ENCODE measurements at regions of chr6 and their contacts with region 1.

Region 1: GRCh38 chr6:137094411-137095008 is 49.7 kb upstream of the IL20RA start:
- DNase-seq: peak in 8 of 9 donors; percentile 17 to 56 (median 40)
- ATAC-seq: peak; percentile 80
- H3K4me3 ChIP-seq: no peak overlapping the region
- H3K4me3 Mint-ChIP-seq: peak overlapping the region in 1 of 10 donors; percentile 33
- H3K27ac ChIP-seq: no peak overlapping the region
- H3K27ac Mint-ChIP-seq: peak overlapping the region in 1 of 9 donors; percentile 11
- H3K4me1 ChIP-seq: peaks cover 0 to 3% of the 10 kb centered on the region in 2 donors
- H3K4me1 Mint-ChIP-seq: peaks cover 0 to 44% (median 0%) of the 10 kb centered on the region in 7 donors
- H3K27me3 ChIP-seq: no peaks in the 10 kb centered on the region
- H3K27me3 Mint-ChIP-seq: peaks cover 0 to 10% (median 0%) of the 10 kb centered on the region in 5 donors

Region 2: DNA sequence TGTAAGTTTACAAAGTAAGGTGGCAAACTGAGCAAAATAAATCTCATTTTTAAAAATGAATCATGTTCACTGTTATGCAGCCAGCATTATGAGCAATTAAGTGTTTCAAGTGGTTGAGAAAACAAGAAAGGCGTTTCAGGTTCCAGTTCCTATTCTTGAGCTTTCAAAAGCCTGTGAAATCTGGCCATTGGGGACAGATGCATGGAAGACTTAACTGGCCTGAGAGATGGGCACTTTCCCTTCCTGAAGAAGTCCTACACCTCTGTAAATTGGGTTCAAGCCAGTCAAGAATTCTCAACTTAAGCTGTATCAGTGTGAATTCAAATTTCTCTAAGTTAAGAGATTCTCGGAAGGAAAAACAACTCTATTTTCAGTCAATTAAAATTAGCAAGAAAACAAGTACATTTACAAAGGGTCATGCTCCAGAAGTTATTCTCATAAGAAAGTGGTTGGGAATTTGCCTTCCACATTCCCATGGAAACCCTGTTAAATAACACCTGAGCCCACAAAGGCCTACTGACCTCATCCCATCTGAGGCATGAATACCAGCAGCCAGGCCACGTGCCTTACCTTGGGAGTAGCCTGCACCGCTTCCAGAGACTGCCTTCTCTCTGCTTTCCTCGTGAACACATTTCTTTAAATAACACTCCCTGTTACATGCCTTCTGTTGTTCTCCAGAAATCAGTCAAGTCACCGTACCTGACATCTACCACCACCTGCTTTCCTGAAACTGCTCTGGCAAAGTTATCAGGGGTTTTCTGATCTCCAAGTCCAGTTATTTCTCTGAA is 321.6 kb before region 1 on chr6:
- CTCF ChIA-PET with region 1: no interaction called
- POLR2A ChIA-PET with region 1: no interaction called
- intact Hi-C with region 1: no loop called
- DNase-seq: no peak
- ATAC-seq: peak; percentile 34
- H3K4me3 ChIP-seq: no peak overlapping the region
- H3K4me3 Mint-ChIP-seq: no peak overlapping the region
- H3K27ac ChIP-seq: no peak overlapping the region
- H3K27ac Mint-ChIP-seq: peak overlapping the region in 3 of 9 donors; percentile 1 to 77 (median 23)
- H3K4me1 ChIP-seq: peaks cover 4 to 6% of the 10 kb centered on the region in 2 donors
- H3K4me1 Mint-ChIP-seq: peaks cover 11 to 51% (median 26%) of the 10 kb centered on the region in 7 donors
- H3K27me3 ChIP-seq: no peaks in the 10 kb centered on the region
- H3K27me3 Mint-ChIP-seq: no peaks in the 10 kb centered on the region

Region 3: GRCh38 chr6:137155830-137156229 is 61.3 kb after region 1 on chr6:
- CTCF ChIA-PET with region 1: no interaction called
- POLR2A ChIA-PET with region 1: no interaction called
- intact Hi-C with region 1: loop called in 1 of 2 experiments (anchors 2 kb)
- DNase-seq: peak in 8 of 9 donors; percentile 11 to 53 (median 26)
- ATAC-seq: peak; percentile 90
- H3K4me3 ChIP-seq: no peak overlapping the region
- H3K4me3 Mint-ChIP-seq: peak overlapping the region in 8 of 10 donors; percentile 4 to 71 (median 31)
- H3K27ac ChIP-seq: no peak overlapping the region
- H3K27ac Mint-ChIP-seq: peak overlapping the region in 3 of 9 donors; percentile 63 to 88 (median 63)
- H3K4me1 ChIP-seq: peaks cover 8 to 13% of the 10 kb centered on the region in 2 donors
- H3K4me1 Mint-ChIP-seq: peaks cover 12 to 37% (median 15%) of the 10 kb centered on the region in 7 donors
- H3K27me3 ChIP-seq: no peaks in the 10 kb centered on the region
- H3K27me3 Mint-ChIP-seq: peaks cover 4 to 30% (median 9%) of the 10 kb centered on the region in 5 donors

Region 4: DNA sequence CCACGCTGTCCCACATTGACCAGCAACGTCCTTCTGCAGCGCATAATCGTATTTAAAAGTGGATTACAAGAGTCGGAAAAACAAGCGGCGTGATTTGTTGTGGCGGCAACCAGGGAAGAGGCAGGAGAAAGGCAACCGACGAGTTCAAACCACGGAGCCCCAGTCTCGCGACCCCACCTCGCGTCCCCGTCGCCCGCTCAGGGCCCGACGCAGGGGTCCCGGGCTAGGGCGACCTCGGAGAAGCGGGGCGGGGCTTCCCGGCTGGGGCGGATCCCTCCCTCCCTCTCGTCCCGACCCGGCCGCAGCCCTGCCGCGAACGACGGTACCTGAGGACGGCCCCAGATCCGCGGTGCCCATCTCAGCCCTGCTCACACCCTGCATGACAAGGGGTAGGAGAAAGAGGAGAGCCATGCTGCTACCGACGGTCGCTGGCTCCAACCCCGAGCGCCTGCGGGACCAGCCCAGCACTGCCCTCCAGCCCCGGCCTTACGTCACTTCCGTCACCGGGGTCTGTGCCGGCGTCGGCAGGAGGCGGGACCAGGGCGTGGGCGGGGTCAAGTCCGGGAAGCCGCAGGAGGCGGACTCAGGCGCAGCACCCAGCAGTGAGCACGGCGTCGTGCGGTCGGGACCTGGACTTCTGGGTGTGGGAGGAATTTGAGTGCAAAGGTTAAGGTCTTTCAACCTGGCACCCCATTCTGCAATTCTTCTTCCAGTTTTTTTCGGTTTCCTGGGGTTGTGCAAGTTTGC is 124.6 kb after region 1 on chr6 and contains the start of gene IFNGR1:
- CTCF ChIA-PET with region 1: no interaction called
- POLR2A ChIA-PET with region 1: no interaction called
- intact Hi-C with region 1: loop called in 1 of 2 experiments (anchors 2 kb)
- DNase-seq: peak; percentile 89 to 97 (median 93)
- ATAC-seq: peak; percentile 92
- H3K4me3 ChIP-seq: peak within 1 kb of the TSS; percentile 88
- H3K4me3 Mint-ChIP-seq: peak within 1 kb of the TSS; percentile 85 to 100 (median 99)
- H3K27ac ChIP-seq: peak within 1 kb of the TSS; percentile 91
- H3K27ac Mint-ChIP-seq: peak within 1 kb of the TSS; percentile 91 to 100 (median 100)
- H3K4me1 ChIP-seq: peaks cover 20 to 43% of the 10 kb centered on the region in 2 donors
- H3K4me1 Mint-ChIP-seq: peaks cover 36 to 84% (median 69%) of the 10 kb centered on the region in 7 donors
- H3K27me3 ChIP-seq: no peaks in the 10 kb centered on the region
- H3K27me3 Mint-ChIP-seq: no peaks in the 10 kb centered on the region
- total RNA-seq, gene IFNGR1: 29.2 to 90.7 (median 31.3) TPM

Region 5: DNA sequence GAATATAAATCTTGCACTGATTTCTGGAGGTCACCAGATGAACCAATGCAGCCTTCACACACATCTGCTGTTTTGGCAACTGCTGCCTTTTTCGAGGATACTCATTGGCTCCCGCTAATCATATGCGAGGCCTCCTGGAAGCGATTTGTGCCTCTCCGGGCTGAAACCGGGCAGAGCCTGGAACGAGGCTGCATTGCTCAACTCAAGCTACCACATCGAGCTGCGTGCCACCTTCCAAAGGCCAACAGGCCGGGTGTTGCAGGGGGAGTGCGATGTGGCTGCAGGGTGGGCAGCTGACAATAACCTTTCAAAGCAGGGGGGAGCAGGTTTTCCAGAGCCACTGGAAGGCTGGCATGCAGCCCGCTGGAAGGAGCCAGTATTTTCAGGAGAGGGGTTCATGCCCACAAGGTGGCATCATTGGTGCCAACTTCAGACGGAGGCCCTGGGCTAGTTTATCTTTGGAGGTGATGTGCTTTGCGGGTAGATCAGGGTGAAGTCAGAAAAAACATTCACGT is 247.2 kb after region 1 on chr6:
- CTCF ChIA-PET with region 1: no interaction called
- POLR2A ChIA-PET with region 1: no interaction called
- intact Hi-C with region 1: loop called in 1 of 2 experiments (anchors 1 kb)
- DNase-seq: peak in 8 of 9 donors; percentile 16 to 62 (median 48)
- ATAC-seq: peak; percentile 80
- H3K4me3 ChIP-seq: peak overlapping the region; percentile 24
- H3K4me3 Mint-ChIP-seq: peak overlapping the region in 9 of 10 donors; percentile 52 to 87 (median 77)
- H3K27ac ChIP-seq: no peak overlapping the region
- H3K27ac Mint-ChIP-seq: peak overlapping the region in 1 of 9 donors; percentile 76
- H3K4me1 ChIP-seq: peaks cover 5 to 10% of the 10 kb centered on the region in 2 donors
- H3K4me1 Mint-ChIP-seq: peaks cover 6 to 19% (median 17%) of the 10 kb centered on the region in 7 donors
- H3K27me3 ChIP-seq: no peaks in the 10 kb centered on the region
- H3K27me3 Mint-ChIP-seq: peaks cover 0 to 55% (median 0%) of the 10 kb centered on the region in 5 donors

Region 6: DNA sequence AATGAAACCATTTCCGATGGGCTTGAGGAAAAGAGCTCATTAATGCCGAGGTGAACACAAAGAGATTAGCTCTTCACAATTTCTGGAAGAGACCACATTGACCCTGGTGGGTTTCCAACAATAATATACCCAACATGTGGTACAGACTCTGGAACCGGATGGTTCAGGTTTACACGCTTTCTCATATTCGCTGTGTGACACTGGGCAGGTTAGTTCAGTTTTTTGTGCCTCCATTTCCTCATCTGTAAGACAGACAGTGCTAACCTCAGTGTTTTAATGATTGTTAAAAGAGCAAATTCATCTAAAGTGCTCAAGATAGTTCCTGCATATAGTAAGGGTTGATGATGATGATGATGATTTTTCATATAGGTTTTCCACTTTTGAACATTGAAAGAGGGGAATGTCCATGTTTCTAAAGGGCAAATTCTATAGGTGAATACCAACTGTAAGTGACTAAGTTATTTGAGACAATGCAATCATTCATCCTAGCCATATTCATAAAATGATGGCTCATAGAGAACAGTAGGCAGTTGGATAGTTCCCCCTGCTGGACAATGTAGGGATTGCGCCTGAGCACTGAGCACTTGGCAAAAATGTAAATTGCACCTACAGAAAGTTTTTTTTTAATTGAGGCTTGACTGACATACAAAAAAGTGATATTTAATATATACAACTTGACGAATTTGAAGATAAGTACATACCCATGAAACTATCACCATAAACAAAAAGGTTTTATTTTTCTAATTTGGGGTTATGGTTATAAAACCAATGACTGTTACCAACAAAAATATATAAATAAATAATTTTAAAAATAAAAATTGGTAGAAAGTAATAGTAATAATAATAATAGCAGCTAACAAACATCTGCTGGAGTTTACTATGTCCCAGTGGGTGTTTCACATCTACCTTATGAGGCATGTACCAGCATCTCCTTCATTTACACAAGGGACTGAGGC is 1014.8 kb after region 1 on chr6:
- CTCF ChIA-PET with region 1: interaction called, 3 read pairs
- POLR2A ChIA-PET with region 1: no interaction called
- intact Hi-C with region 1: loop called in 1 of 2 experiments (anchors 1 kb)
- DNase-seq: peak; percentile 47 to 77 (median 68)
- ATAC-seq: peak; percentile 84
- H3K4me3 ChIP-seq: no peak overlapping the region
- H3K4me3 Mint-ChIP-seq: peak overlapping the region in 4 of 10 donors; percentile 2 to 45 (median 7)
- H3K27ac ChIP-seq: no peak overlapping the region
- H3K27ac Mint-ChIP-seq: no peak overlapping the region
- H3K4me1 ChIP-seq: peaks cover 8 to 10% of the 10 kb centered on the region in 2 donors
- H3K4me1 Mint-ChIP-seq: peaks cover 14 to 27% (median 20%) of the 10 kb centered on the region in 7 donors
- H3K27me3 ChIP-seq: peaks cover 0 to 6% of the 10 kb centered on the region in 2 donors
- H3K27me3 Mint-ChIP-seq: peaks cover 34 to 56% (median 47%) of the 10 kb centered on the region in 5 donors

Measured in naive thymus-derived CD4-positive, alpha-beta T cell (primary cell).